Heart right ventricle (tissue), 16 donors: ENCODE measurements at regions of chr17 and their contacts with region 1.

Region 1: GRCh38 chr17:58577642-58578091 is 63.2 kb upstream of the MTMR4 start:
- DNase-seq: peak; percentile 23 to 43
- ATAC-seq: peak in 3 of 8 donors; percentile 26 to 53 (median 31)
- H3K4me3 ChIP-seq: no peak overlapping the region
- H3K27ac ChIP-seq: no peak overlapping the region
- H3K4me1 ChIP-seq: peaks cover 0 to 13% (median 0%) of the 10 kb centered on the region in 9 donors
- H3K27me3 ChIP-seq: no peaks in the 10 kb centered on the region
- CTCF ChIP-seq: peak; percentile 21 to 71 (median 64)

Region 2: DNA sequence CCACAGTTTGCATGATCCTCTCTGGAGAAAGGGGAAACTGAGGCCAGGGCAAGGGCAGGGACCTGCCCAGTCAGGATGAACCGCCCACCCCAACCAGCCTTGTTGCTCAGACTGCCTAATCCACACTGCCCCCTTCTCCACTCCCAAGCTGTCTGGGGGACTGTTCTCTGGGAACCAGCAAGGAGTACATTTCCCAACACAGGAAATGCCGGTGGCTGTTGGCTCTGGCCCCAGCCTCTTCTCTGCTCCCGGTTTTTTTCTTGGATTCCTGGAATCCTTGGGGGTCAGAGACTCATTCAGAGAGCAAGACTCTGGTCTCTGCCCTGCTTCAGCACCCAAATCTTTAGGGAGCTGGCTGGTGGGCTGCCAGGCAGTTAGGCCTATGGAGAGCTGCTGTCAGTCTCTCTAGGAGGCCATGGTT is 52.5 kb before region 1 on chr17:
- intact Hi-C with region 1: loop called in 4 of 10 experiments (anchors 2 to 10 kb)
- DNase-seq: peak; percentile 72 to 74
- ATAC-seq: peak; percentile 36 to 77 (median 66)
- H3K4me3 ChIP-seq: peak overlapping the region in 3 of 10 donors; percentile 5 to 17 (median 15)
- H3K27ac ChIP-seq: peak overlapping the region; percentile 21 to 87 (median 66)
- H3K4me1 ChIP-seq: peaks cover 6 to 69% (median 61%) of the 10 kb centered on the region in 9 donors
- H3K27me3 ChIP-seq: no peaks in the 10 kb centered on the region
- CTCF ChIP-seq: no peak

Region 3: DNA sequence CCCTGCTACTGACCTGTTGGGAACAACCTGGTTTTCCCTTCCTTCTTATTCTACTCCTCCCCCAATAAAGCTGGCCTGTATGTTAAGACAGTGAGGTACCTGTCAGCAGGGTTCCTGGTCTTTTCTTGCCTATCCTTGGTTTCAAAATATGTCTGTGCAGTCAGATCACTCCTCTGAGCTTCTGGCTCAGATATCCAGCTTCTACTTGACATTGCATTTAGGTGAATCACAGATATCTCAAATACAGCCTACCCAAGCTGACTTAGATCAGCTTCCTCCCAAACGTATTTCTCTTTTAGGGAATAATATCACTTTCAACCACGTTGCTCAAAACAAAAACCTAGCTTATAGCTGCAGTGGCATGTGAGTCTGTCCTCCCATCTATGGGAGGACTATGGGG is 65.5 kb after region 1 on chr17:
- intact Hi-C with region 1: no loop called
- DNase-seq: no peak
- ATAC-seq: no peak
- H3K4me3 ChIP-seq: no peak overlapping the region
- H3K27ac ChIP-seq: no peak overlapping the region
- H3K4me1 ChIP-seq: peaks cover 0 to 9% (median 0%) of the 10 kb centered on the region in 9 donors
- H3K27me3 ChIP-seq: no peaks in the 10 kb centered on the region
- CTCF ChIP-seq: no peak